Heart left ventricle (tissue), 16 donors: ENCODE measurements at regions of chr4 and their contacts with region 1.

Region 1: GRCh38 chr4:88419874-88420273 is 37.0 kb upstream of the HERC5 start:
- DNase-seq: no peak
- ATAC-seq: no peak
- H3K4me3 ChIP-seq: no peak overlapping the region
- H3K27ac ChIP-seq: no peak overlapping the region
- H3K4me1 ChIP-seq: peaks cover 0 to 2% (median 0%) of the 10 kb centered on the region in 12 donors
- H3K27me3 ChIP-seq: no peaks in the 10 kb centered on the region
- CTCF ChIP-seq: no peak
- POLR2A ChIP-seq: no peak

Region 2: DNA sequence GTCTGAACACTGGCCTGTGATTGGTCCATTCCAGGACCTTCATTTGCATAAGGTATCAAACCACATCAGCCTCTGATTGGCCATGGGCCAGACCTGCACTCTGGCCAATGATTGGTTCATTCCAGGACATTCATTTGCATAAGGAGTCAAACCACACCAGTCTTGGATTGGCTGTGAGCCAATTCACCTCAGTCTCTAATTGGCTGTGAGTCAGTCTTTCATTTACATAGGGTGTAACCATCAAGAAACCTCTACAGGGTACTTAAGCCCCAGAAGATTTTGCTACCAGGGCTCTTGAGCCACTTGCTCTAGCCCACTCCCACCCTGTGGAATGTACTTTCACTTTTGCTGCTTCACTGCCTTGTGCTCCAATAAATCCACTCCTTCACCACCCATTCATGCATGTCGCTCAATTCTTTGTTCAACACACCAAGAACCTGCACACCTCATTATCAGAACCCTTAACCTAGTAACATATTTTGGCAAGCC is 22.9 kb after region 1 on chr4:
- intact Hi-C with region 1: loop called in 1 of 10 experiments (anchors 1 kb)
- DNase-seq: no peak
- ATAC-seq: no peak
- H3K4me3 ChIP-seq: no peak overlapping the region
- H3K27ac ChIP-seq: no peak overlapping the region
- H3K4me1 ChIP-seq: peaks cover 0 to 9% (median 0%) of the 10 kb centered on the region in 12 donors
- H3K27me3 ChIP-seq: no peaks in the 10 kb centered on the region
- CTCF ChIP-seq: no peak
- POLR2A ChIP-seq: no peak

Region 3: DNA sequence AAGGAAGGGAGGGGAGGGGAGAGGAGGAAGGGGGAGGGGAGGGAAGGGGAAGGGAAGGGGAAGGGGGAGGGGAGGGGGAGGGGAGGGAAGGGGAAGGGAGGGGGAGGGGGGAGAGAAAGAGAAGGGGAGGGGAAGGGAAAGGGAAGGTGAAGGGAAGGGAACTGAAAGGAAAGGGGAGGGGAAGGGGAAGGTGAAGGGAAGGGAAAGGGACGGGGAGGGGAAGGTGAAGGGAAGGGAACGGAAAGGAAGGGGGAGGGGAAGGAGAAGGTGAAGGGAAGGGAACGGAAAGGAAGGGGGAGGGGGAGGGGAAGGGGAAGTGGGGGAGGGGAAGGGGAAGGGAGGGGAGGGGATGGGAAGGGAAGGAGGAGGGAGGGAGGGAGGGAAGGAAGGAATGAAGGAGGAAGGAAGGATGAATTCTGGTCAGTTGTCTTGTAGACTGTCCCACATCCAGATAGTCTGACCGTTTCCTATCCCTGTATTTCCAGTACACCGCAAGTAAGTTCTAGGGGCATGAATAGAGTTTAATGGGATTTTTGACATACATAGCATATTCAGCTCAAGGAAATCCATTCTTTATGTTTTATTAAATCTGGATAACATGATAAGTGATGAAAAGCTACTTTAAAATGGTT is 57.5 kb after region 1 on chr4:
- intact Hi-C with region 1: no loop called
- DNase-seq: no peak
- ATAC-seq: no peak
- H3K4me3 ChIP-seq: no peak overlapping the region
- H3K27ac ChIP-seq: no peak overlapping the region
- H3K4me1 ChIP-seq: peaks cover 0 to 6% (median 0%) of the 10 kb centered on the region in 12 donors
- H3K27me3 ChIP-seq: no peaks in the 10 kb centered on the region
- CTCF ChIP-seq: no peak
- POLR2A ChIP-seq: no peak

Region 4: GRCh38 chr4:88728146-88728545 is 308.3 kb after region 1 on chr4:
- intact Hi-C with region 1: no loop called
- DNase-seq: peak in 3 of 5 donors; percentile 32 to 55 (median 45)
- ATAC-seq: peak; percentile 44 to 83 (median 78)
- H3K4me3 ChIP-seq: no peak overlapping the region
- H3K27ac ChIP-seq: peak overlapping the region in 8 of 12 donors; percentile 14 to 50 (median 26)
- H3K4me1 ChIP-seq: peaks cover 0 to 38% (median 21%) of the 10 kb centered on the region in 12 donors
- H3K27me3 ChIP-seq: no peaks in the 10 kb centered on the region
- CTCF ChIP-seq: no peak
- POLR2A ChIP-seq: no peak

Region 5: DNA sequence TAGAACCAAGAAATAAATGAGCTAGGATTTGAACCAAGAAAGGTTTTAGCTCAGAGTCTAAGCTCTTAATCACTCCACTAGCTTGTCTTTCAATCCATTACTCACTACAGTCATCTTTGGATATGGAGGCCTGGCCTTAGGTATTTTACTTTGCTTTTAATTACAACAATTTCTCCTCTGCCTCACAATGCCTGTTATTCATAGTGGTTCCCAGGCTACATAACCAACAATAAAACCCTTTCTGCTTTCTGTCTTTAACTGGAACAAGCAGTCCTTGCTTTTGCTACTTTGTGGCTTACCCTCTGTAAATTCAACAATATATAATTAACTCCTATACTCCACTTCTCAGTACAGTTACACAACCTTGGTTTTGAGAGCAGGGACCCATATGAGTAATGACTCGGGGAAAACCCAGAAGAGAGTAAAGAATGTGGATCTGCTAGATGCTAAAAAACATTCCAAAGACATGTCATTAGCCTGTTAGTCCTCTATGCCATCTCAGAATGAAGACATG is 372.5 kb after region 1 on chr4:
- intact Hi-C with region 1: no loop called
- DNase-seq: no peak
- ATAC-seq: no peak
- H3K4me3 ChIP-seq: no peak overlapping the region
- H3K27ac ChIP-seq: no peak overlapping the region
- H3K4me1 ChIP-seq: peaks cover 0 to 19% (median 0%) of the 10 kb centered on the region in 12 donors
- H3K27me3 ChIP-seq: no peaks in the 10 kb centered on the region
- CTCF ChIP-seq: no peak
- POLR2A ChIP-seq: no peak

Region 6: GRCh38 chr4:88866862-88867550 is 447.1 kb after region 1 on chr4:
- intact Hi-C with region 1: no loop called
- DNase-seq: no peak
- ATAC-seq: no peak
- H3K4me3 ChIP-seq: no peak overlapping the region
- H3K27ac ChIP-seq: no peak overlapping the region
- H3K4me1 ChIP-seq: no peaks in the 10 kb centered on the region
- H3K27me3 ChIP-seq: no peaks in the 10 kb centered on the region
- CTCF ChIP-seq: no peak
- POLR2A ChIP-seq: no peak